WTC11 (cell line): ENCODE measurements at regions of chr4 and their contacts with region 1.

Region 1: GRCh38 chr4:156169011-156169410 is 215.3 kb upstream of the CTSO start:
- DNase-seq: peak; percentile 17
- ATAC-seq: peak; percentile 94
- H3K4me3 Mint-ChIP-seq: no peak overlapping the region
- H3K27ac Mint-ChIP-seq: no peak overlapping the region
- H3K4me1 Mint-ChIP-seq: peaks cover 11% of the 10 kb centered on the region
- H3K27me3 Mint-ChIP-seq: no peaks in the 10 kb centered on the region
- CTCF ChIP-seq: peak; percentile 40; the same call in 1 of the 2 replicates

Region 2: GRCh38 chr4:156378033-156378665 is 209.1 kb after region 1 on chr4:
- CTCF ChIA-PET with region 1: interaction called, 11 read pairs
- POLR2A ChIA-PET with region 1: no interaction called
- DNase-seq: peak; percentile 26
- ATAC-seq: peak; percentile 95
- H3K4me3 Mint-ChIP-seq: no peak overlapping the region
- H3K27ac Mint-ChIP-seq: no peak overlapping the region
- H3K4me1 Mint-ChIP-seq: peaks cover 17% of the 10 kb centered on the region
- H3K27me3 Mint-ChIP-seq: no peaks in the 10 kb centered on the region
- CTCF ChIP-seq: peak; percentile 57

Region 3: DNA sequence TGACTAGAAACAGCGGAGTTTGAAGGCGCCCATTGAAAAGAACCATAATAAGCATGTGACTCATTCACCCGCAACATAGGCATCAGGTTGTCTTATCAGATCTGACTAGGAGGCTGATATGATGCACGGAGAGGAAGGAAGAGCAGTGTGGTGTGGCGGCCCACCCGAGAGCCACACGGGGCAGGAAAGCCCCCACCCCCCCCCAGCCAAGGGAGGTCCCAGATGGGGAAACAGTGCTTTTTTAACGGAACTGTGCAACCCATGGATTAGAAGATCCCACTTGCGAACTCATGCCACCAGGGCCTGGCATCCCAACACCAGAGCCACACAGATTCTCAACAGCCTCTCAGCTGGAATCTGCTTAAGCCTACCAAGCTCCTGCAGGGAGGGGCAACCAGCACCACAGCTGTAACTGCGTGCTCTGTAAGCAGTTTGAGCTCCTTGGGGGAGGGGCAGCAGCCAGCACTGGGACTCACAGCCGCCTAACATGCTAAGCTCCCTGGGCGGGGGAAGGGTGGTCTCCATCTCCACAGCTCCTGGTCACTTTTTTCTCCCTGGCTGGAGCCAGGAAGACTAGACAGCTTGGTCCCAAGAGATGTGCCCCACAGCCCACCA is 336.4 kb after region 1 on chr4:
- CTCF ChIA-PET with region 1: no interaction called
- POLR2A ChIA-PET with region 1: no interaction called
- DNase-seq: peak; percentile 54
- ATAC-seq: peak; percentile 85
- H3K4me3 Mint-ChIP-seq: no peak overlapping the region
- H3K27ac Mint-ChIP-seq: no peak overlapping the region
- H3K4me1 Mint-ChIP-seq: peaks cover 14% of the 10 kb centered on the region
- H3K27me3 Mint-ChIP-seq: no peaks in the 10 kb centered on the region
- CTCF ChIP-seq: no peak